CD8-positive, alpha-beta T cell (primary cell): ENCODE measurements at regions of chr2 and their contacts with region 1.

Region 1: DNA sequence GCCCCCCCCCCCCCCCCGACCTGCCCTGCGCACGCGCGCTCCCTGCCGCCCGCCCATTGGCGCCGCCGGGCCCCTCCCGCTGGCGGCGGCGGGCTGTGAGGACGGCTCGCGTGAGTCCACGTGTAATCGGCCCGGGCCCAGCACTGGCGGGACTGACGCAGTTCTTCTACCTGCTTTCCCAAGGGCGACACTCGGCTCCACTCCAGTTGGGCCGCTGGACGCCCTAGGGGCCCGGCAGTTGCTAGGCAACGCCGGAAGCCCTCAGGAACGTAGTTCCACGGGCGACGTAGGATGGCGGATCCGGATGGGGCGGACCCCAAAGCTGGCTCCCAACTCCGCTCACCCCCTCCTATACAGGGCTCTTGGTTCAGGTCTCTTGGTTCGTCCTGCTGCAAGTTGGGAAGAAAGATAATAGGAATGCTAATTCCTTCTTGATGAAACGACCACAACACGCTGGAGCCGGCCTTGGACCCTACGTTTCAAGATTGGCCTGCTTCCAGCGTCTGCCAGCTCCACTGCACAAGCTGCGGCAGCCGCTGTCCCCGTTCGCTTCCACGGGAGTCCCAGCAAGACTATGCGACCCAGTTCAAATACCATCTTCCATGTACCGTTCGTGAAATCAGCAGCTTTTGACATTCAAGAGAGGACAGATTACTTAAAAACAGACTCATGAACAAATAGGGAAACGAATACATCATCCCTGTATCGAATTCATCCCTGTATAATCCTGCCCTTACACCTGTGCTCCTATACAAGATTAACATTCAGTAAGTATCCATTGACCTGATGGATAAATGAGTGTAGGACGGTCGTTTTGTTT is 415 bp upstream of the MCFD2 start:
- DNase-seq: peak; percentile 60 to 92 (median 81)
- ATAC-seq: peak; percentile 80
- H3K4me3 ChIP-seq: peak overlapping the region; percentile 87 to 99
- H3K4me3 Mint-ChIP-seq: peak overlapping the region; percentile 89
- H3K27ac ChIP-seq: peak overlapping the region; percentile 86 to 91
- H3K27ac Mint-ChIP-seq: peak overlapping the region; percentile 85
- H3K4me1 ChIP-seq: peaks cover 39% of the 10 kb centered on the region
- H3K4me1 Mint-ChIP-seq: peaks cover 53% of the 10 kb centered on the region
- H3K27me3 ChIP-seq: no peaks in the 10 kb centered on the region
- H3K27me3 Mint-ChIP-seq: no peaks in the 10 kb centered on the region
- CTCF ChIP-seq: no peak

Region 2: GRCh38 chr2:46555011-46555410 is 361.0 kb before region 1 on chr2:
- CTCF ChIA-PET with region 1: no interaction called
- POLR2A ChIA-PET with region 1: no interaction called
- intact Hi-C with region 1: no loop called
- DNase-seq: peak in 6 of 9 experiments; percentile 44 to 65 (median 50)
- ATAC-seq: no peak
- H3K4me3 ChIP-seq: no peak overlapping the region
- H3K4me3 Mint-ChIP-seq: no peak overlapping the region
- H3K27ac ChIP-seq: no peak overlapping the region
- H3K27ac Mint-ChIP-seq: no peak overlapping the region
- H3K4me1 ChIP-seq: no peaks in the 10 kb centered on the region
- H3K4me1 Mint-ChIP-seq: peaks cover 36% of the 10 kb centered on the region
- H3K27me3 ChIP-seq: no peaks in the 10 kb centered on the region
- H3K27me3 Mint-ChIP-seq: no peaks in the 10 kb centered on the region
- CTCF ChIP-seq: peak; percentile 51

Region 3: GRCh38 chr2:46929612-46930011 is 13.6 kb after region 1 on chr2:
- CTCF ChIA-PET with region 1: interaction called, 35 read pairs
- POLR2A ChIA-PET with region 1: interaction called, 3 read pairs
- intact Hi-C with region 1: loop called in 1 of 2 experiments (anchors 2 kb)
- DNase-seq: no peak
- ATAC-seq: no peak
- H3K4me3 ChIP-seq: no peak overlapping the region
- H3K4me3 Mint-ChIP-seq: no peak overlapping the region
- H3K27ac ChIP-seq: no peak overlapping the region
- H3K27ac Mint-ChIP-seq: no peak overlapping the region
- H3K4me1 ChIP-seq: no peaks in the 10 kb centered on the region
- H3K4me1 Mint-ChIP-seq: peaks cover 9% of the 10 kb centered on the region
- H3K27me3 ChIP-seq: no peaks in the 10 kb centered on the region
- H3K27me3 Mint-ChIP-seq: no peaks in the 10 kb centered on the region
- CTCF ChIP-seq: no peak

Region 4: DNA sequence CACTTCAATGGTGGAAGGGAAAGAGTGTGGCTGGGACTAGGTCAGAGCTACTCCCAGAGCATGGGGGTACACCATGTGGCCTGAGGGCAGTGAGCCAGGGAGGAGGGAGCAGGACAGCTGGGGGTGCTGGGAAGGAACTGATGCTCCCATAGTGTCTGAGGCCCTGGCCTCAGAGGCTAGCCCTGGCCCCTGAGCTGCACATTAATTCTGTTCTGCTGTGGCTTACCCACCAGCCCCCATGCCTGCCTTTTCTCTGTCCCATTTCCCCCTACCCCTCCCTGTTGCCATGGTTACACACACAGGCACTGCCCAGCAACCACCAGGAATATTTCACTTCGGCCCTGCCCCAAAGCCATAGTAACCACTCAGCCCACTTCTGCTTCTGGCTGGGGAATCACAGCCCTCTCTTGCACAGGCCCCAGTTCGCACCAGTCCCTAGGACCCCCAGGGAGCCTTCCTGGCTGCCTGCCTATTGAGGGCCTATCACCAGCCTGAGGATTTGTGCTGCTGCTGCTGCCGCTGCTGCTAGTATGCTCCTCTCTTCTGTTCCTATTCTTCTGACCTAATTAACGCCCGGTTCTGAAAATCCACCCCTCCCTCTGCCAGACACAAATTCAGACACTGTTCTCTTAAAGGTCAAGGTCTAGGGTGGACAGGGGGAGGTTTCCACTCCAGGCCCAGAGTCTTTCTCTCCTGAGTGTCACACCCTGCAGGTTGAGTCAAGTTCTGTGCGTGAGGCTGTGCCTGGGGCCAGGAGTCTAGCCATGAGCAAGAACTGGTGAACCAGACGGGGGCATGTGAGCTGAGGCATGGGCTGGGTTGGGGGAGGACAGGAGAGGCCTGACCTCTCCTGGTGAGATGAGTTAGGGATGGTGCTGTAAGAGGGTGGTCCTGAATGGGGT is 86.7 kb after region 1 on chr2:
- CTCF ChIA-PET with region 1: no interaction called
- POLR2A ChIA-PET with region 1: no interaction called
- intact Hi-C with region 1: no loop called
- DNase-seq: peak in 1 of 9 experiments; percentile 25
- ATAC-seq: no peak
- H3K4me3 ChIP-seq: no peak overlapping the region
- H3K4me3 Mint-ChIP-seq: no peak overlapping the region
- H3K27ac ChIP-seq: no peak overlapping the region
- H3K27ac Mint-ChIP-seq: no peak overlapping the region
- H3K4me1 ChIP-seq: no peaks in the 10 kb centered on the region
- H3K4me1 Mint-ChIP-seq: no peaks in the 10 kb centered on the region
- H3K27me3 ChIP-seq: no peaks in the 10 kb centered on the region
- H3K27me3 Mint-ChIP-seq: no peaks in the 10 kb centered on the region
- CTCF ChIP-seq: no peak

Region 5: DNA sequence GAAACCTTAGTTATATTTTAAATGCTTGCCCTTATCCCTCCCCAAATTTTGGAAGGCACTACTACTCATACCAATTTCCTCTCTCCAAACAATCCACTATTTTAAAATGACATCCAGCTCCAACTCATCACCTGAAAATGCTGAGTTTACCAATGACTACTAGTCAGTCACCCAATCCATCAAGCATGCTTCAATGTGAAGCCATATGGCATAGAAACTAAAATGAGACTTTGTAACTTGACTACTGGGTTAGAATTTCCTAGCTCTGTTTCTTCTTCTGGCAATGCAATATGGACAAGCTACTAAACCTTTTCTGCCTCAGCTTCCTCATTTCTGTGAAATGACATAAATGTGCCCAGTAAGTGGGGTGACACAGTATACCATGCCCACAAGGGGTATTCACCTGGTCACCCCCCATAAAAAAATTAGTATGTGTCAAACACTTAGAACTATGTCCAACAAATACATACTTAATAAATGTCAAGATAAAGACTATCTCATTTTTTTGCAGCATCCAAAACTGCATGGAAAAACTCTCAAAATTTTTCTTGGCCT is 249.1 kb after region 1 on chr2:
- CTCF ChIA-PET with region 1: no interaction called
- POLR2A ChIA-PET with region 1: no interaction called
- intact Hi-C with region 1: no loop called
- DNase-seq: no peak
- ATAC-seq: no peak
- H3K4me3 ChIP-seq: no peak overlapping the region
- H3K4me3 Mint-ChIP-seq: no peak overlapping the region
- H3K27ac ChIP-seq: peak overlapping the region in 1 of 2 experiments; percentile 15
- H3K27ac Mint-ChIP-seq: peak overlapping the region; percentile 66
- H3K4me1 ChIP-seq: peaks cover 10% of the 10 kb centered on the region
- H3K4me1 Mint-ChIP-seq: peaks cover 50% of the 10 kb centered on the region
- H3K27me3 ChIP-seq: no peaks in the 10 kb centered on the region
- H3K27me3 Mint-ChIP-seq: no peaks in the 10 kb centered on the region
- CTCF ChIP-seq: no peak

Region 6: DNA sequence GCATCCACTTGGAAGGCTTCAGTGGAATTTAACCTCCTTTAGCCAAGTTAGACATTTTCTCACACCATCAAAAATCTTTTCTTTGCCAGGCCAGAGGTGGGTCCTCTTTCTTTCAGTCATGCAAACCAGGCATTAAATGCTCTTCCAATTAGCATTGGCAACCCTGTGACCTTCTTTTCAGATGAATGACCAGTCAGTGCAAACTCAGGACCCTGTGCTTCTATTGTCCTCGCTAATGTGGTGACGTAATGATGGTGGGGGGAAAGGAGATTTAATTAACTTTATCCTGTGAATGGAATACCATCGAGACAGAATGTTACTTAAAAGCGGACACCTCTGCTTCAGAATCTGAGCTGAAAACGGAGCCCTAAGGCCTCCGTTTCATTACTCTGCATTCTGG is 262.3 kb after region 1 on chr2:
- CTCF ChIA-PET with region 1: interaction called, 3 read pairs
- POLR2A ChIA-PET with region 1: interaction called, 3 read pairs
- intact Hi-C with region 1: loop called in 1 of 2 experiments (anchors 1 kb)
- DNase-seq: no peak
- ATAC-seq: no peak
- H3K4me3 ChIP-seq: no peak overlapping the region
- H3K4me3 Mint-ChIP-seq: no peak overlapping the region
- H3K27ac ChIP-seq: no peak overlapping the region
- H3K27ac Mint-ChIP-seq: no peak overlapping the region
- H3K4me1 ChIP-seq: peaks cover 22% of the 10 kb centered on the region
- H3K4me1 Mint-ChIP-seq: peaks cover 33% of the 10 kb centered on the region
- H3K27me3 ChIP-seq: no peaks in the 10 kb centered on the region
- H3K27me3 Mint-ChIP-seq: peaks cover 2% of the 10 kb centered on the region
- CTCF ChIP-seq: no peak

Region 7: GRCh38 chr2:47402805-47403608 is 487.0 kb after region 1 on chr2 and contains the start of gene MSH2:
- CTCF ChIA-PET with region 1: no interaction called
- POLR2A ChIA-PET with region 1: no interaction called
- intact Hi-C with region 1: loop called (anchors 2 to 5 kb)
- DNase-seq: peak; percentile 72 to 96 (median 91)
- ATAC-seq: peak; percentile 93
- H3K4me3 ChIP-seq: peak within 1 kb of the TSS; percentile 81 to 100
- H3K4me3 Mint-ChIP-seq: peak within 1 kb of the TSS; percentile 98
- H3K27ac ChIP-seq: peak within 1 kb of the TSS; percentile 64 to 71
- H3K27ac Mint-ChIP-seq: peak within 1 kb of the TSS; percentile 94
- H3K4me1 ChIP-seq: peaks cover 15% of the 10 kb centered on the region
- H3K4me1 Mint-ChIP-seq: peaks cover 40% of the 10 kb centered on the region
- H3K27me3 ChIP-seq: no peaks in the 10 kb centered on the region
- H3K27me3 Mint-ChIP-seq: no peaks in the 10 kb centered on the region
- CTCF ChIP-seq: no peak
- total RNA-seq, gene MSH2: 5.6 to 8.8 TPM

Region 8: DNA sequence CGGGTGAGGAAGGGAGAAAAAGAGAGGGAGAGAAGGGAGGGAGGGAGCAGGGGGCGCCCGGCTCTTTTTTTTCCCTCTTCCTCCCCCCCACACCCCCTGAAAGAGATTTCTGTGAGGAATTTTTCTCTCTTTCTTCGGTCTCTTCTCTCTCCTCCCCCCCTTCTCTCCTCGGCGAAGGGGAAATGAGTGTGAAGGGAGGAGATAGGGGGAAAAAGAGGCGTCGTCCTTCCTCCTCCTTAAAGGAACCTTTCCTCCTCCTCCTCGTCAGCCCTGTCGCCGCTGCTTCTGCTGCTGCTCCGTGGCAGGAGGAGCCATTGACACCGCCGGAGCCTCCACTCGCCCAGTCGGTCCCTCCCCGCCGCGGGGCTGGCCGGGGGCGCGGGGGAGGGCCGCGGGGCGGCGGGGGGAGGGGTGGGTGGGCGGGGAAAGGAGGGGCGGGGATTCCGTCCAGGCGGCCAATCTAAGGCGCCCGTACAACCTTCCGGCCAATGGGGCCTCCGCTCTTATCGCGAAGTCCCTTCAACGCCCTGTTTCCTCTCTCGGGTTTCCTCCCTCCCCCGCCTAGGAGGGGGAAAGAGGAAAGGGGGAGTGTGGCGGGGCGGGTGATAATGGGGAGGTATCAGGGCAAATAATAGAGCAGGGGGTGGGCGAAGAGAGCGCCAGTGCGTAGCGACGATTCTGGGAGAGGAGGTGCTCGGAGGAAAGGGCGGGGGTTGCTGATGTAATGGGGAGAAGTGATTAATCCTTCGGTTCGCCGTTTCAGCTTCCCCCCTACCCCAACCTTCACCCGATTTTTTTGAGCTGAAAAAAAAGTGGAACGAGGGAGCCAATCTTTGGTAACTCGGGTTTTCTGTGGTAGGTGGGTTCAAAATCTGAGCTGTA is 990.4 kb after region 1 on chr2 and contains the start of gene FBXO11:
- CTCF ChIA-PET with region 1: no interaction called
- POLR2A ChIA-PET with region 1: no interaction called
- intact Hi-C with region 1: loop called in 1 of 2 experiments (anchors 2 kb)
- DNase-seq: peak; percentile 91 to 99 (median 94)
- ATAC-seq: peak; percentile 80
- H3K4me3 ChIP-seq: peak within 1 kb of the TSS; percentile 80 to 92
- H3K4me3 Mint-ChIP-seq: peak within 1 kb of the TSS; percentile 76
- H3K27ac ChIP-seq: peak within 1 kb of the TSS; percentile 81 to 97
- H3K27ac Mint-ChIP-seq: peak within 1 kb of the TSS; percentile 80
- H3K4me1 ChIP-seq: peaks cover 30% of the 10 kb centered on the region
- H3K4me1 Mint-ChIP-seq: peaks cover 40% of the 10 kb centered on the region
- H3K27me3 ChIP-seq: no peaks in the 10 kb centered on the region
- H3K27me3 Mint-ChIP-seq: no peaks in the 10 kb centered on the region
- CTCF ChIP-seq: no peak
- total RNA-seq, gene FBXO11: 144 to 146 TPM